WTC11 (cell line): ENCODE measurements at regions of chr1 and their contacts with region 1.

Region 1: GRCh38 chr1:115807723-115808122 is 33.2 kb downstream of the NHLH2 start:
- DNase-seq: peak; percentile 48
- ATAC-seq: peak; percentile 92
- H3K4me3 Mint-ChIP-seq: no peak overlapping the region
- H3K27ac Mint-ChIP-seq: no peak overlapping the region
- H3K4me1 Mint-ChIP-seq: peaks cover 22% of the 10 kb centered on the region
- H3K27me3 Mint-ChIP-seq: no peaks in the 10 kb centered on the region
- CTCF ChIP-seq: peak; percentile 60

Region 2: DNA sequence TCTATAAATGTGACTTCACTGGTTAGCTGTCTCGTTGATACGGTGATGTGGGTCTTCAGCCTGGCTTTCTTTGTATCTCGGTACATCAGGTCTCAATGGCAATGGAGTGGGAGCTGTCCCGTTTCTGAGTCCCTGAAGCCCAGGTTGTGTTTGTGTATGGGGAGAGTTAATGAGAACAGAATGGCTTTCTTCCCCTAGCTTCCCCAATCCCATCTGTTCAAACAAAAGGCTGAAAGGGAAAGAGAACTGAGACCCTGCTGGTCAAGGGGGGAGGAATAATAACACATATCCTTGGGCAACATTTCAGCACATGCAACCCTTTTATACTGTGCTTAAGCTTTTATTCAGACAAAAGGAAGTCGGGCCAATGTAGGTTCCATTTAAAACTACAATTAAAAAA is 10.8 kb before region 1 on chr1:
- CTCF ChIA-PET with region 1: interaction called, 13 read pairs
- POLR2A ChIA-PET with region 1: no interaction called
- DNase-seq: no peak
- ATAC-seq: peak; percentile 87
- H3K4me3 Mint-ChIP-seq: no peak overlapping the region
- H3K27ac Mint-ChIP-seq: peak overlapping the region; percentile 77
- H3K4me1 Mint-ChIP-seq: peaks cover 49% of the 10 kb centered on the region
- H3K27me3 Mint-ChIP-seq: no peaks in the 10 kb centered on the region
- CTCF ChIP-seq: no peak

Region 3: GRCh38 chr1:115890580-115890979 is 82.9 kb after region 1 on chr1:
- CTCF ChIA-PET with region 1: no interaction called
- POLR2A ChIA-PET with region 1: no interaction called
- DNase-seq: no peak
- ATAC-seq: no peak
- H3K4me3 Mint-ChIP-seq: no peak overlapping the region
- H3K27ac Mint-ChIP-seq: no peak overlapping the region
- H3K4me1 Mint-ChIP-seq: no peaks in the 10 kb centered on the region
- H3K27me3 Mint-ChIP-seq: no peaks in the 10 kb centered on the region
- CTCF ChIP-seq: no peak